GM12878 (cell line): ENCODE measurements at regions of chr2 and their contacts with region 1.

Region 1: GRCh38 chr2:112259509-112260294 is 4.9 kb upstream of the ZC3H8 start:
- DNase-seq: peak; percentile 35
- ATAC-seq: peak; percentile 70
- H3K4me3 ChIP-seq: no peak overlapping the region
- H3K27ac ChIP-seq: no peak overlapping the region
- H3K4me1 ChIP-seq: peaks cover 3% of the 10 kb centered on the region; the same call in 1 of the 2 replicates
- H3K27me3 ChIP-seq: no peaks in the 10 kb centered on the region
- CTCF ChIP-seq: peak; percentile 94 to 99 (median 99)
- EP300 ChIP-seq: no peak
- POLR2A ChIP-seq: 0 out of 2 replicates have a peak, but pooled peaks have one; percentile 27
- RAD21 ChIP-seq: peak; percentile 88

Region 2: GRCh38 chr2:112242384-112242783 is 17.3 kb before region 1 on chr2:
- CTCF ChIA-PET with region 1: interaction called, 14 read pairs
- POLR2A ChIA-PET with region 1: interaction called, 3 read pairs
- RAD21 ChIA-PET with region 1: no interaction called
- SMC1A ChIA-PET with region 1: interaction called, 17 read pairs
- in situ Hi-C with region 1: no loop called
- intact Hi-C with region 1: no loop called
- DNase-seq: no peak
- ATAC-seq: no peak
- H3K4me3 ChIP-seq: no peak overlapping the region
- H3K27ac ChIP-seq: no peak overlapping the region
- H3K4me1 ChIP-seq: no peaks in the 10 kb centered on the region
- H3K27me3 ChIP-seq: no peaks in the 10 kb centered on the region
- CTCF ChIP-seq: no peak
- EP300 ChIP-seq: no peak
- POLR2A ChIP-seq: no peak
- RAD21 ChIP-seq: no peak

Region 3: DNA sequence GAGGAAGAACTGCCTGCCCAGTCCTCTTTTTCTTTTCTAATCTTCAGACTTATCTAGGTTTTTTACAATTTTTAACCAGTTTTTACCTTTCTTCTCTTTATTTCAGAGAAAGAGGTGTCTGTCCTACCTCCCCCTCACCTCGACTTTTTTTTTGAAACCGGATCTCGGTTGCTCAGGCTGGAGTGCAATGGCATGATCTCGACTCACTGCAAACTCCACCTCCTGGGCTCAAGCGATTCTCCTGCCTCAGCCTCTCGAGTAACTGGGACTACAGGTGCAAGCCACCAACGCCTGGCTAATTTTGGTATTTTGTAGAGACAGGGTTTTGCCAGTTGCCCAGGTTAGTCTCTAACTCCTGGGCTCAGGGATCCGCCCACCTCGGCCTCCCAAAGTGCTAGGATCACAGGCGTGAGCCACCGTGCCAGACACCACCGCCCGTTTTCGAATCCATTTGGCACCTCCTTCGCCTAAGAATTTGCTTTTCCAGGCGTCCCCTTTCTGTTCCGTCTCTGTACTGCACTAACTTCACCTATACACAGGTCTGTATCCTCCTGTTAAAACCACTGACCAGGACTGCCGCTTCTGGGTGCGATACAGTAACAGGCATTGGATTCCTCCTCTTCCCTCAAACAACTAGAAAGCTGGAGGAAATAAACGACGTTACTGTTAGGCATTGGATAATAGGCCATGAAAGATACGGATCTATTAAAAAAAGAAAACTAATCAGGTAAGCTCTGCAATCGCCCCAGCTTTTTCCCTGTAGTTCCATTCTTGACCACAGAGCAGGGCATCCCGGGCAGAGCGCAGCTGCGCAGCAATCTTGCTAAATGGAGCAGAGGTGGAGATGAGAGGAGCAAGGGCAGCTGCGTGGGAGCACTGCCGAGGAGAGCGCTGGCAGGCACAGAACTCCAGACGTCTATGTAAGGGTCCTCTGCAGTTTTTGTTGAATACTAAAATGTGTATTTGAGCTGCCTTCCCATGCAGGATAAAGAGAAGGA is 85.6 kb after region 1 on chr2:
- CTCF ChIA-PET with region 1: no interaction called
- POLR2A ChIA-PET with region 1: no interaction called
- RAD21 ChIA-PET with region 1: no interaction called
- SMC1A ChIA-PET with region 1: no interaction called
- in situ Hi-C with region 1: no loop called
- intact Hi-C with region 1: no loop called
- DNase-seq: no peak
- ATAC-seq: no peak
- H3K4me3 ChIP-seq: no peak overlapping the region
- H3K27ac ChIP-seq: no peak overlapping the region
- H3K4me1 ChIP-seq: peaks cover 6% of the 10 kb centered on the region
- H3K27me3 ChIP-seq: no peaks in the 10 kb centered on the region
- CTCF ChIP-seq: no peak
- EP300 ChIP-seq: no peak
- POLR2A ChIP-seq: no peak
- RAD21 ChIP-seq: no peak

Region 4: GRCh38 chr2:112433932-112434730 is 174.4 kb after region 1 on chr2:
- CTCF ChIA-PET with region 1: interaction called, 7 read pairs
- POLR2A ChIA-PET with region 1: no interaction called
- RAD21 ChIA-PET with region 1: interaction called, 10 read pairs
- SMC1A ChIA-PET with region 1: interaction called, 4 read pairs
- in situ Hi-C with region 1: no loop called
- intact Hi-C with region 1: loop called (anchors 5 kb)
- DNase-seq: no peak
- ATAC-seq: no peak
- H3K4me3 ChIP-seq: no peak overlapping the region
- H3K27ac ChIP-seq: no peak overlapping the region
- H3K4me1 ChIP-seq: no peaks in the 10 kb centered on the region
- H3K27me3 ChIP-seq: no peaks in the 10 kb centered on the region
- CTCF ChIP-seq: no peak
- EP300 ChIP-seq: no peak
- POLR2A ChIP-seq: no peak
- RAD21 ChIP-seq: no peak